GM10248 (cell line): ENCODE measurements at regions of chr1 and their contacts with region 1.

Region 1: DNA sequence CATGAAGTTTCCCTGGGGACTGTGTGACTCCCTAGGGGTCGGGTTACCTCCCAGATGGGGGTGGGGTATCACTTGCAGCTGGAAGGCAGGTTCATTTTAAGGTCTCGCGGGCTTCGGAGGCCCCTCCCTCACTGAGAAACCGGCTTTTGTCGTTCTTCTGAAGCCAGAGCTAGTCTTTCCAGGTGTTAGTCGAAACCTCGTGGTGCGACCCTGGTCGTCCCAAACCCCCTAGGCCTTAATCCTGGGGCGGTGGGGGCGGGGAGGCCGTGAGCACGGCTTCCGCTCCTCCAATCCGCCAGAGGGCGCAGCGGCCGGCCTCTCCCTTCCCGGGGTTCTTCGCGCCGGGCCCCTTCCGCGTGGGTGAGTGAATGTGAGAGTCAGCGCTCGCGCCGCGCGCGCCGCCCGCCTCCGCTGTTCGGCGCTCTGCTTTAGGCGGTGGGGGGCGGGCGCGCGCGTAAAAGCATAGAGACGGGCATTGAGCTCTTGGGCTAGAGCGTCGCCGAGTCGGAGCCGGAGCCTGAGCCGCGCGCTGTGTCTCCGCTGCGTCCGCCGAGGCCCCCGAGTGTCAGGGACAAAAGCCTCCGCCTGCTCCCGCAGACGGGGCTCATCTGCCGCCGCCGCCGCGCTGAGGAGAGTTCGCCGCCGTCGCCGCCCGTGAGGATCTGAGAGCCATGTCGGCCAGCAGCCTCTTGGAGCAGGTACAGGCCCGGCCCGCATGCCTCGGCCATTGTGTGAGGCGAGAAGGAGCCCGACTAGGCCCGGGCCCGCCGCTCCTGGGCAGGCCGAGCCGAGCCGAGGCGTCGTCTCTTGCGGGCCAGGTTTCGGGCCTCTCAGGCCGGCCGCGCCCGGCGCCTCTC is at the start of gene YTHDF2:
- DNase-seq: peak; percentile 96
- CTCF ChIP-seq: peak; percentile 92

Region 2: GRCh38 chr1:28668191-28668955 is 68.3 kb before region 1 on chr1 and contains the start of gene GMEB1:
- CTCF ChIA-PET with region 1: interaction called, 12 read pairs
- POLR2A ChIA-PET with region 1: no interaction called
- DNase-seq: peak; percentile 96
- CTCF ChIP-seq: no peak

Region 3: DNA sequence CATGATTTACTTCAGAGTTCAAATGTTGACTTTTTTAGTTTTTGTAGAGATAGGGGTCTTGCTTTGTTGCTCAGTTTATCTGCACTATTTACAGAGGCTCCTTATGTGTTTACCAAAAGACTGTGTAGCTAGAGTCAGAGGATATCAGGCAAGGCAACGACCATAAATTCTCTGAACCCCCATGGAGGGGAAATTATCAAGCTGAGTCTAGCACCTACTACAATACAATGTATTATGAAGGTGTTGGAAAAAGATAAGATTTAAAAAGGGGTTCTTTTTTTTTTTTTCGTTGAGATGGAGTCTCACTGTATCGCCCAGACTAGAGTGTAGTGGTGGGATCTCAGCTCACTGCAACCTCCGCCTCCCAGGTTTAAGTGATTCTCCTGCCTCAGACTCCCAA is 51.7 kb before region 1 on chr1:
- CTCF ChIA-PET with region 1: interaction called, 12 read pairs
- POLR2A ChIA-PET with region 1: no interaction called
- DNase-seq: no peak
- CTCF ChIP-seq: no peak

Region 4: GRCh38 chr1:28718586-28719331 is 17.9 kb before region 1 on chr1:
- CTCF ChIA-PET with region 1: interaction called, 44 read pairs
- POLR2A ChIA-PET with region 1: interaction called, 3 read pairs
- DNase-seq: no peak
- CTCF ChIP-seq: no peak

Region 5: GRCh38 chr1:28751315-28752060 is 14.8 kb after region 1 on chr1:
- CTCF ChIA-PET with region 1: interaction called, 27 read pairs
- POLR2A ChIA-PET with region 1: interaction called, 4 read pairs
- DNase-seq: no peak
- CTCF ChIP-seq: no peak

Region 6: GRCh38 chr1:28761189-28761588 is 24.5 kb after region 1 on chr1:
- CTCF ChIA-PET with region 1: interaction called, 10 read pairs
- POLR2A ChIA-PET with region 1: interaction called, 3 read pairs
- DNase-seq: no peak
- CTCF ChIP-seq: no peak

Region 7: GRCh38 chr1:28775121-28775944 is 38.7 kb after region 1 on chr1:
- CTCF ChIA-PET with region 1: interaction called, 11 read pairs
- POLR2A ChIA-PET with region 1: no interaction called
- DNase-seq: peak; percentile 81
- CTCF ChIP-seq: no peak

Region 8: GRCh38 chr1:28811766-28812668 is 75.3 kb after region 1 on chr1 and contains the start of gene OPRD1:
- CTCF ChIA-PET with region 1: no interaction called
- POLR2A ChIA-PET with region 1: no interaction called
- DNase-seq: no peak
- CTCF ChIP-seq: no peak